BJ (cell line): ENCODE measurements at regions of chr2 and their contacts with region 1.

Region 1: DNA sequence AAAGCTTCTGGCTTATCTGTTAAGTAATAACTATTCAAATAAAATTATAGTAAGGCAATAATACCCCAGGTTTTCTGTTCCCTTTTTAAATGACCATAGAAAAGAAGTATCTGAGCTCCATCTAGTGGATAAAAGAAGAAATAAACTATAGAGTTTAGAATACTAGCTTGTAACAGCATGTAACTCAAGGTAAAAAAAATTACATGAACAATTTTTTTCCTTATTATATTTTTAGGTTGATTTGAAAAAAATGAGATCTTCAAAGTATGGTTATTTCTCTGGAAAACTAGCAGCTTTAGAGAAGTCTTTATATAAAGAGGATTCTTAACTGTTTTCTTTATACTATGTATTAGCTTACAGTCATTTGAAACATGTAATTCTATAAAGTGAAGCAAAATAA is 58.1 kb downstream of the NCKAP1 start:
- DNase-seq: no peak
- H3K4me3 ChIP-seq: no peak overlapping the region
- H3K27me3 ChIP-seq: no peaks in the 10 kb centered on the region
- CTCF ChIP-seq: peak; percentile 50

Region 2: GRCh38 chr2:182763311-182763912 is 216.7 kb before region 1 on chr2:
- CTCF ChIA-PET with region 1: interaction called, 11 read pairs
- POLR2A ChIA-PET with region 1: no interaction called
- DNase-seq: no peak
- H3K4me3 ChIP-seq: no peak overlapping the region
- H3K27me3 ChIP-seq: no peaks in the 10 kb centered on the region
- CTCF ChIP-seq: peak; percentile 69

Region 3: DNA sequence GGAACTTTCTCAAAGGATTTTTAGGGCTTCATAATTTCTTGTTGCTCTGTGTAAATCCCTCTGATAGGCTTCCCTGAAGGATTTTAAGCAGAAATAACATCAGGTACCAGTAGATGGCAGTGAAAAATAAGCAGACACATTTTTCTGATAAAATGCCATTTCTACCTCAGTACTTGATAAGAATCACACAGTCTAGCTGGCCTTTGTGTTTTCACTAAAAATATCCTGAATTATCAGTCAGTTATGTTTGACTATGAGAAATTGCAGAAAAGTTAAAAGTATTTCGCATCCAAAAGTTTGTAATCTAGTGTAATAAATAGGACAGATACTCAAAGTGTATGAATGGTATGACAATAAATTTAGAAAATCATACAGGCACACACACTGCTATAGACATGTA is 195.3 kb before region 1 on chr2:
- CTCF ChIA-PET with region 1: interaction called, 37 read pairs
- POLR2A ChIA-PET with region 1: no interaction called
- DNase-seq: no peak
- H3K4me3 ChIP-seq: no peak overlapping the region
- H3K27me3 ChIP-seq: no peaks in the 10 kb centered on the region
- CTCF ChIP-seq: peak; percentile 59